ENCODE measurements at regions of chr20 and their contacts with region 1.

Region 1: DNA sequence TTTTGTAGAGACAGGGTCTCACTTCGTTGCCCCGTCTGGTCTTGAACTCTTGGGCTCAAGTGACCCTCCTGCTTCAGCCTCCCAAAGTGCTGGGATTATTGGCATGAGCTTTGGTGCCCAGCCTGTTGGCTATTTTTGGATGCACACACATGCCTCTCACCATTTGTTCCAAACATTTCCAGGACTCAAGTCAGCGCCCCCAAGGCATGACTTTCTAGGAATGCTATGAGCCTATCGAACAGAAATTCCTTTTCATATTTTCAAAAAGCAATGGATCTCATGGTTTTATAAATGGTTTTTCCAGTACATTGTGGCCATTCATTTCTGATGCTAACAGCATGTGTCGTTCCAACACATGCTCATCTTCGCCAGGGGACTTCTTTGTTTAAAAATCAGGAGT is 119.3 kb upstream of the NAA20 start:
- DNase-seq: no peak
- H3K4me3 ChIP-seq: no peak overlapping the region
- H3K27ac ChIP-seq: no peak overlapping the region
- H3K27me3 ChIP-seq: no peaks in the 10 kb centered on the region
- CTCF ChIP-seq: no peak

Region 2: DNA sequence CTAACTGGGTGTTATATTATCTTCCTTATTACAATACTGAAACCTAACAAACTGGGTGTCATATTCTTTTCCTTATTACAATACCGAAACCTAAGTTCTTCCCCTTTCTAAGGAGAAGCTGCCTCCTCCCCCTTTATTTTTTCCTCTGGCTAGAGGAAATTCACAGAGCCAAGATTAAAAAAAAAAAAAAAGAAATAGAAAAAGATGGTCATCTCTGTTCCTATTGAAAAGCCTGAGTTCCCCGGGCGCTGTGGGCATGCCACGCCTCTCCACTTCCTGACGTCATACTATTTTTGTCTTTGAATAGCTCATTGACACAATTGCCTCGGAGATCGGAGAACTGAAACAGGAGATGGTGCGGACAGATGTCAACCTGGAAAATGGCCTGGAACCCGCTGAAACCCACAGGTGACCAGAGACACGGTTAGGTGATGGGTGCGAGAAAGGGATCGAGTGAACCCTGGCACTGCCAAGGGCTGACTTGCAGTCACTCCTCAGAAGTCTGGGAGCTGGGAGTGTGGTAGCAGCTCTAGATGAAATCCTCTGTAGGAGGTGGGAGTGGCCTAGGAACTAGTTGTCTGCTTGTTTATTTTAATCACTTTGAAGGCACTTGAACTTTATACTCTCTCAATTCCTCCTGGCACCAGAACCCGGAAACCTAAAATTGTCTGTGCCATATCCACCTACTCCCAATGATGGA is 37.1 kb after region 1 on chr20:
- intact Hi-C with region 1: loop called in 1 of 2 experiments (anchors 5 kb)
- DNase-seq: peak in 8 of 10 donors; percentile 37 to 78 (median 68)
- H3K4me3 ChIP-seq: peak overlapping the region in 57 of 59 donors; percentile 29 to 73 (median 48)
- H3K27ac ChIP-seq: peak overlapping the region in 57 of 59 donors; percentile 30 to 91 (median 82)
- H3K27me3 ChIP-seq: no peaks in the 10 kb centered on the region
- CTCF ChIP-seq: peak in 6 of 56 donors; percentile 5 to 14 (median 11)

Measured in dorsolateral prefrontal cortex (tissue), 120 donors.